Activated CD4-positive, alpha-beta T cell treated with anti-CD3 and anti-CD28 coated beads, Interleukin-2, amount 10 ng/mL, durations not matched to agents 24 days and 14 days (primary cell): ENCODE measurements at regions of chr2 and their contacts with region 1.

Region 1: GRCh38 chr2:144320491-144320890 is 199.4 kb downstream of the ZEB2 start:
- DNase-seq: peak; percentile 74
- H3K4me3 Mint-ChIP-seq: peak overlapping the region; percentile 50
- H3K27ac Mint-ChIP-seq: peak overlapping the region; percentile 12
- H3K4me1 Mint-ChIP-seq: peaks cover 40% of the 10 kb centered on the region
- H3K27me3 Mint-ChIP-seq: no peaks in the 10 kb centered on the region

Region 2: DNA sequence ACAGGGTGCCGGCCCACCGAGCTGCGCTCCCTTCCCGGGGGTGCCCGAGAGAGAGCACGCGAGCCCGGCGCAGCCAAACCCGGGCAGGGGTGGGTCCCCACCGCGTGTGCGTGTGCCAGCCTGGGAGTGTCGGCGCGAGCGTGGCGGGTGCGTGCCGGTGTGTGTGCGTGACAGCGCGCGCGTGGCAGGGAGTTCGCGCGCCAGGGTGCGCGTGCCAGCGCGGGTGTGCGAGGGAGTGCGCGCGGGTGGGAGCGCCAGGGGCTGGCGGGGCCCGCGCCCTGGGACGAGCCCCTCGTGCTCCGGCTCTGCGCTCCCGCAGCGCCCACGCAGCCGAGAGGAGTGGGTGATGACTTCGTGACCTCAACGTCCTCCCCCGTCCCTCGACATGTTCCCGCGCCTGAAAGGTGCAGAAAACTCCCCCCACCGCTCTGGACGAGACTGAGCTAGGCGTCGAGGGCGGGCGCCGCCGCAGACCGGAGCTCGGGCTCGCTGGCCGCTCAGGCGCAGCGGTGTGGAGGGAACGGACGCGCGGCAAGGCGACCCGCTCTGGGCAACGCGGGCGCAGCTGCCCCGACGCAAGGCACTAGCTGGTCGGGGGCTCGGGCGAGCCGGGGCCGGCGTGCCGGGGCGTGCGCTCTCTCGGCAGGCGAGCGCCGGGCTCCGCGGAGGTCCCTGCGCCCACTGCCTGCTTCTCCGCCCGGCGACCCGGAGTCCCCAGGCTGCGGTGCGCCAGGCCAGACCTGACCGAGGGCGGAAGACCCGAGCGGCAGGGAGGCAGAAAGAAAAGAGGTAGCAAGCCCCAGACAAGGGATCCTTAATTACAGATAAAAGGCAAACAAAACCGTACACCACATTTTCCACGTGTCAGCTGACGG is 383.4 kb before region 1 on chr2:
- intact Hi-C with region 1: loop called (anchors 10 kb)
- DNase-seq: peak; percentile 58
- H3K4me3 Mint-ChIP-seq: peak overlapping the region; percentile 66
- H3K27ac Mint-ChIP-seq: peak overlapping the region; percentile 43
- H3K4me1 Mint-ChIP-seq: peaks cover 11% of the 10 kb centered on the region
- H3K27me3 Mint-ChIP-seq: peaks cover 65% of the 10 kb centered on the region

Region 3: GRCh38 chr2:144256996-144257707 is 63.3 kb before region 1 on chr2:
- intact Hi-C with region 1: loop called (anchors 5 kb)
- DNase-seq: peak; percentile 48
- H3K4me3 Mint-ChIP-seq: no peak overlapping the region
- H3K27ac Mint-ChIP-seq: peak overlapping the region; percentile 74
- H3K4me1 Mint-ChIP-seq: peaks cover 28% of the 10 kb centered on the region
- H3K27me3 Mint-ChIP-seq: no peaks in the 10 kb centered on the region

Region 4: DNA sequence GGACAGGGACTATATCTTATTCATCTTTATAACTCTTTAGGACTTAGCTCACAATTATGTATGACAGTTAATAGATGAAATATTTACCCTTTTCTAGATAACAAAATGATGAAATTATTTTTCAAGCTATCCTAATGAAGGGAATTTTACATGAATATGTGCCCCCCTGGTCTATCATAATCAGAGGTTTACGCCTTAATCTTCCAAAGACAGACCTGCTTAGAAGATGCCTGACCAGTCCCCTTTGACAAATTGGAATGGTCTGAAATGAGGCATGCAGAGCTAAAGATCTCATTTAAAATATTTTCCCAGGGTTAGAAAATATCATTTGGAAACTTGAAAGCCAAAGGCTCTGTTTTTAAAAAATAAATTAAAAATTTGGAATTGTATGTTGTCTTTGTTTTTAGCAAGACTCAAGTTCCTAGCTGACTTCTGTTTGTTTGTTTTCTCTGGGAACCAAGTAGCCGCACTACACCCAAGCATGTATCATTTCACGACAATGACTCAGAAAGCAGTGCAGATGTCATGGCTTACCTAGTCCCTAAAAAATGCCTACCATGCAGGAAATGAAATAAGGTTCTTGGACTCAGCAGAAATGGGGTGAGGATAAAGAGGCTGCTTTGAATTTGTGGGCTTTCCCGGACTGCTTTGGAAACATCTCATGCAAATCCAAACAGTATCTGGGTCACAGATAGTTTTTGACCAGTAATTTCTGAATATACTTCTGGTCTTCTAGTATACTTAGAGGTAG is 37.3 kb after region 1 on chr2:
- intact Hi-C with region 1: loop called (anchors 1 kb)
- DNase-seq: peak; percentile 66
- H3K4me3 Mint-ChIP-seq: peak overlapping the region; percentile 9
- H3K27ac Mint-ChIP-seq: peak overlapping the region; percentile 68
- H3K4me1 Mint-ChIP-seq: peaks cover 16% of the 10 kb centered on the region
- H3K27me3 Mint-ChIP-seq: no peaks in the 10 kb centered on the region

Region 5: DNA sequence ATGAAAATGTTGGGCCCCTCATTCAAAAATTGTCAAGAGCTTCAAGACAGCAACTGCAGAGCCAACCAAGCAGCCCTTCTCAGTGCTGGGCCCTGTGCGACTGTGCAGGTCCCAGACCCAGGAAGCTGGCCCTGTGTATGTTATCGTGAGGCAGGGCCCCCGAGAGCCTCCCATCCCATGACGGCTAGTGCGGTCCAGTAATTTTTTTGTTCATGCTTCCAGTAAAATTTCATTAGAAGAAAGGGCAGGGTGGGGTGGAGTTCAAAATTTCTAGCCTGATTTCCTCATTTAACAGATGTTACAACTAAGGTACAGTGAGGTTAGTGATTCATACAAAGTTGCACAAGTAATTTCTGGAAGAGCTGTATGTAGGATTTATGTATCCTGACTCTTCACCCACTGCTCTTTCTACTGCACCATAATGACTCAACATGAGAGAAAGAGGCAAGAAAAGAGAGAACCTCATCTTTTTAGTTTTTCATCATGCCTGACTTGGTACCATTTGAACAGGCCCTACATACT is 93.9 kb after region 1 on chr2:
- intact Hi-C with region 1: loop called (anchors 1 kb)
- DNase-seq: no peak
- H3K4me3 Mint-ChIP-seq: peak overlapping the region; percentile 12
- H3K27ac Mint-ChIP-seq: peak overlapping the region; percentile 55
- H3K4me1 Mint-ChIP-seq: peaks cover 18% of the 10 kb centered on the region
- H3K27me3 Mint-ChIP-seq: no peaks in the 10 kb centered on the region